ENCODE measurements at regions of chr9 and their contacts with region 1.

Region 1: DNA sequence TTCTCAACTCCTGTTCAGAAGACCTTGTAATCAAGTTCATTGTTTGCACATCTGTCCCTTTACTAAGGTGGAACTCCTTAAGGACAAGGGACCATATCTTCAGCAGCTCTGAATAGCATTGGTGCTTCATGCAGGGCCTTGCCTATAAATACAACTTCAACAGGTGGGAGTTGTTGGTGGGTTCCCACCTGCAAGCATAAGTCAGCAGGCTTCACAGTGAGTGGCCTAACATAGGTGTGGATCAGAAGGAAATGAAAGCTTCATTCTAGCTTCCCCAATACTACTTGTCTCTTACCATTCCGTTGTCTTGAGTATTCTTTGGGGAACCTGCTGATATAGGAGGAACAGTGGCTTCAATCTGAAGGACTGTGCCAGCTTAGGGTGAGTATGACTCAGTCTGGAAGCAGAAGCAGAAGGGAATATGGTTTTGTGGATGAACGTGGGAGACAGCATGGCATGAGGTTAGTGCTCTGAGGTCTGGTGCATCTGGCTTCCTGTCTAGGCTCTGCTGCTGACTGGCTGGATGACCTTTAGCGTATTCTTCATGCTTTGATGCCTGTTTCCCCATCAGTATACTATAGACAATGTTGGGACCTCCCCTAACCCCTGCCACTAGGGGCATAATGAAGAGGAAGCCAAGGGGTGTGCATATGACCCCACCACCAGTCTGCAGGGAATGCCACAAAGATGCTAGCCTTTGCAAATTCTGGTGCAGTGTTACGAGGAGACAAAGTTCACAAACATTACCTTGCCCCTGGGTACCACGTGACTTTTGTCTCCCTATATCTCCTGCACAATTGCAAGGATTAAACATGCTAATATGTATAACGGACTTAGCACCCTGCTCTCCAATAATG is 192.3 kb downstream of the PALM2AKAP2 start:
- DNase-seq: no peak
- H3K4me3 Mint-ChIP-seq: peak overlapping the region; percentile 29
- H3K27ac Mint-ChIP-seq: peak overlapping the region; percentile 21
- H3K4me1 Mint-ChIP-seq: peaks cover 93% of the 10 kb centered on the region
- H3K27me3 Mint-ChIP-seq: no peaks in the 10 kb centered on the region

Region 2: GRCh38 chr9:109440797-109441287 is 531.4 kb before region 1 on chr9:
- intact Hi-C with region 1: loop called (anchors 5 kb)
- DNase-seq: peak; percentile 71
- H3K4me3 Mint-ChIP-seq: no peak overlapping the region
- H3K27ac Mint-ChIP-seq: peak overlapping the region; percentile 85
- H3K4me1 Mint-ChIP-seq: peaks cover 34% of the 10 kb centered on the region
- H3K27me3 Mint-ChIP-seq: peaks cover 9% of the 10 kb centered on the region

Region 3: GRCh38 chr9:109894921-109895758 is 77.1 kb before region 1 on chr9:
- intact Hi-C with region 1: loop called (anchors 1 kb)
- DNase-seq: peak; percentile 58
- H3K4me3 Mint-ChIP-seq: peak overlapping the region; percentile 56
- H3K27ac Mint-ChIP-seq: peak overlapping the region; percentile 94
- H3K4me1 Mint-ChIP-seq: peaks cover 74% of the 10 kb centered on the region
- H3K27me3 Mint-ChIP-seq: no peaks in the 10 kb centered on the region

Region 4: DNA sequence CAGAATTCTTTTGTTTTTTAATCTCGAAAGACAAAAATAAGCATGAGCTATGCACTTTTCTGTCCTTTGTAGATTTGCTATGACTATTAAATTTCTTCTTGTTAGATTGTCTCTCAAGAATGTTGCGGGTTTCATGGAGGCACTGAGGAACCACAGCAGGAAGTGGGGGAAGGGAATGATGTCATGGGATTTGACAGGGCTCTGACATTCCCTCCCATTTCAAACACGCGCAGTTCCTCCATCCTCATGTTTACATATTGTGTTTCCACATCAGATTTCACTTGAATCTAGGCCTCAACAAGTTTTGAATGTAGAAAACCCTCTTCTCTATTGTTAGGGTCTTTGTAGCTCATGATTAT is 37.4 kb before region 1 on chr9:
- intact Hi-C with region 1: loop called (anchors 1 kb)
- DNase-seq: no peak
- H3K4me3 Mint-ChIP-seq: peak overlapping the region; percentile 45
- H3K27ac Mint-ChIP-seq: peak overlapping the region; percentile 85
- H3K4me1 Mint-ChIP-seq: peaks cover 57% of the 10 kb centered on the region
- H3K27me3 Mint-ChIP-seq: no peaks in the 10 kb centered on the region

Region 5: GRCh38 chr9:110015759-110016158 is 43.5 kb after region 1 on chr9:
- intact Hi-C with region 1: loop called (anchors 5 kb)
- DNase-seq: no peak
- H3K4me3 Mint-ChIP-seq: no peak overlapping the region
- H3K27ac Mint-ChIP-seq: peak overlapping the region; percentile 48
- H3K4me1 Mint-ChIP-seq: peaks cover 11% of the 10 kb centered on the region
- H3K27me3 Mint-ChIP-seq: peaks cover 1% of the 10 kb centered on the region

Region 6: GRCh38 chr9:110143950-110144545 is 171.8 kb after region 1 on chr9:
- intact Hi-C with region 1: loop called (anchors 1 kb)
- DNase-seq: no peak
- H3K4me3 Mint-ChIP-seq: peak overlapping the region; percentile 61
- H3K27ac Mint-ChIP-seq: peak overlapping the region; percentile 94
- H3K4me1 Mint-ChIP-seq: peaks cover 84% of the 10 kb centered on the region
- H3K27me3 Mint-ChIP-seq: no peaks in the 10 kb centered on the region